Psoas muscle (tissue), 8 donors: ENCODE measurements at regions of chr1 and their contacts with region 1.

Region 1: DNA sequence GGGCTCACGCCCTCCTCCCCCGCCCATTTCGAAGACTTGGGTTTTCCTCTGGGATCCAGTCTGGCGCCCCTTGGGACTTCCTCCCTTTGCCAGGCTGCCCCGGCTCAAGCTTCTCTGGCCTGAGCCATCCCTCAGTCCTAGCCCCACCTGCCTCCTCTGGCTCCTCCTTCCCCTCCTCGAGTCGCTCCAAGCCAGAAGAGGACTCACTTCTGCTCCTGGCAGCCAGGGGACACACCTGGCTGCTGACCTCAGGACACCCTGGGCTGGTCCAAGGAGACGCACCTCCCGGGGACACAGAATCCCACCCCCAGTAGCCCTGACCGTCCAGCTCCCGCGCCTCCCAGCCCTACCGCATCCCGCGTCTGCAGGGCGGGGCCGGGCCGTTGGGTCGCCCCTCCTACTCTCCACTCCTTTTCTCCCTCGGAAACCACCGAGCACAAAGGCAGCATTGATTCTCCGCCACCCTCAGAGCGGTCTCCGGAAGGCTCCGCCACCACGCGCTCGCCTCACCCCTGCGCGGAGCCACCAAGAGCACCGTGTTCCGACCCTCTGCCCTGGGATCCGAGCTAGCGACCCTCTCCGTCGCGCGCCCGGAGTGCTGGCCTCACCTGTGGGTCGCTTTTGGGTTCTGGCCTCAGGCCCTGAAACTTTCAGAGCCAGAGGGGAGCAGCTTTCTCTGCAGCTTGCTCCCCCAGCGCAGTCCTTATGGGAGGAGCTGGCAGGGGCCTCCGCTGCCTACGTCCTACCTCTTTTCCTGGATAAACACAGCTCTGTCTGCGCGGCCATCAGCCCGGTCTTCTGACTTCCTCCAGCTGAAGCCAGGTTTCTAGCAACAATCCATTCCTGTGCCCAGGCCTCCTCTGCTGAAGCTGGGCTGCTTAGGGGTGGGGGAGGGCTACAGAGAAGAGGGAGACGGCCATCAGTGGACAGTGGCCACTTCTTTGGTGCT is at the start of gene C2CD4D:
- DNase-seq: no peak
- ATAC-seq: no peak
- H3K4me3 ChIP-seq: peak within 1 kb of the TSS; percentile 70
- H3K27ac ChIP-seq: no peak within 1 kb of the TSS
- H3K4me1 ChIP-seq: no peaks in the 10 kb centered on the region
- H3K27me3 ChIP-seq: peaks cover 0 to 28% (median 17%) of the 10 kb centered on the region in 3 donors
- CTCF ChIP-seq: no peak
- total RNA-seq, gene C2CD4D: 0.47 TPM in 1 of 4 donors, not detected in the others

Region 2: DNA sequence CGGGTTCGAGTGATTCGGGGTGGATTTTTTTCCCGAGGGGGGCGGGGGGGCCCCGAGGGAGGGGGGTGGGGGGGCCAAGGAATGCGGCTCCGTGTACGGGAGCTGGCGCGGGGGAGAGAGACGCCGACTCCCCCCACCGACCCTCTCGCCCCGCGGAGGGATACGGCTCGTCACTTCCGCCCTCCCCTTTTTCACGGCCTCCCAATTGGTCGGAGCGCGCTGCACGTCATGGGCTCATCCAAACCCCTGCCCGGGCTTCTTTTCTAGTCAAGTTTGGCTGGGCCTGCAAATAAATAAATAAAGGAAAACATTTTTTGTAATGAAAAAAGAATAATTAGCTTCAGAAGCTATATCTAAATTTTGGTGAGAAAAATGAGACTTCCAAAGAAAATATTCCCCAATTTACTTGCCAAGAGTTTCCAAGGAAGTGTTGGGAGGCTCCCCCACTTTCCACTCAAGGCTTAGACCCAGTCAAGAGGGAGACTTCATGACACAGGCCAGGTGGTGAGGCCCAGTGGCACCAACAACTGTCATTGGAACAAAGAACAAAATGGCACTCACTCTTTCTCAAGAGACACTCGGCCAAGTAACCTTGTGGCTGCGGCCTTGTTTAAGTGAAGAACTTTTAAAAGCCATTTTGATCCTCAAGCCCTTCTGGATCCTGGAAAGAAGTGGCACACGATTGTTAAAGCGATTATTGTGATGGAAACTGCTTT is 380.2 kb before region 1 on chr1 and contains the start of gene POGZ:
- intact Hi-C with region 1: loop called in 1 of 2 experiments (anchors 10 kb)
- DNase-seq: peak; percentile 98
- ATAC-seq: peak; percentile 96 to 98 (median 98)
- H3K4me3 ChIP-seq: peak within 1 kb of the TSS; percentile 84
- H3K27ac ChIP-seq: peak within 1 kb of the TSS; percentile 93
- H3K4me1 ChIP-seq: peaks cover 15% of the 10 kb centered on the region
- H3K27me3 ChIP-seq: no peaks in the 10 kb centered on the region
- CTCF ChIP-seq: no peak
- total RNA-seq, gene POGZ: 26.5 to 45.1 (median 41.8) TPM

Region 3: DNA sequence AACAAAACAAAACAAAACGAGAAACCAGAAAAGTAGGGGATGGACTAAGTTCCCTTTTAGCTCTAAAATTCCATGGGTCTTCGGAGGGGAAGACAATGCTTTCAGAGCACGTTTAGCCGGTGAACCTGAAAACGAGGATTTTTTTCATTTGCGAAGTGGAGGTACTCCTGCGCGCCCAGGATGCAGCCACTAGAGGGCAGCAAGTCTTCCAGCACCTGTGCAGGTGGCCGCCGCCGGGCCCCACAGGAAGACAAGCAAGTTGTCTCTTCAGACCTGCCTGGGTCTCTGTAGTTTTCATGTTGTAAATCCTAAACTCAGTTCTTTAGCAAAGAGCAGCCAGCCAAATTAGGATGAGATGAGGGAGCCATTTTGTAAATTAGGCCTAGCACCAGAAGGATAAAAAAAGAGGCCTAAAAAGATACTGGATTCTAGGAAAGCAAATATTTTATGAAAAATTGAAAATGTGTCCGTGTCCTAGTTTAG is 245.5 kb before region 1 on chr1:
- intact Hi-C with region 1: loop called (anchors 5 kb)
- DNase-seq: peak; percentile 72 to 84
- ATAC-seq: peak; percentile 69 to 93 (median 78)
- H3K4me3 ChIP-seq: no peak overlapping the region
- H3K27ac ChIP-seq: no peak overlapping the region
- H3K4me1 ChIP-seq: no peaks in the 10 kb centered on the region
- H3K27me3 ChIP-seq: no peaks in the 10 kb centered on the region
- CTCF ChIP-seq: peak; percentile 94

Region 4: GRCh38 chr1:151739590-151740375 is 99.9 kb before region 1 on chr1:
- intact Hi-C with region 1: loop called in 1 of 2 experiments (anchors 10 kb)
- DNase-seq: no peak
- ATAC-seq: peak in 2 of 4 donors; percentile 23 to 69
- H3K4me3 ChIP-seq: no peak overlapping the region
- H3K27ac ChIP-seq: no peak overlapping the region
- H3K4me1 ChIP-seq: peaks cover 5% of the 10 kb centered on the region
- H3K27me3 ChIP-seq: no peaks in the 10 kb centered on the region
- CTCF ChIP-seq: no peak

Region 5: DNA sequence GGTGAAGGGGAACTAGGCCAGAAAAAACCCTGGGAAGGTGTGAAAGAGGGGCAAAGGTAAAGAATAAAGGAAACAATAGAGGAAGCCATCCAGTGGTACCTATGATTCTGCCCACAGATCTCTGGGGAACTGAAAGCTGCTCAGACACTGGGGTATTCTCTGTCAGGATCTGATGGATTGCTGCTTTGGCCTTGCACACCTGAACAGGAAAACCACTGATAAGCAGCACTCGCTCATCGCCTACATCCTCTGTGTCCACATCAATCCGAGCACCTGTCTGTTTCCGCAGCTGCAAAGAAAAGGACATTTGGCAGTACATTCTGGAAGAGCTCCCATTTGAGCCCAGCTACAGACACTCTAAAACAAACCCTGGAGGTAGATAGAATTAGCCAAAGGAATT is 59.9 kb before region 1 on chr1:
- intact Hi-C with region 1: no loop called
- DNase-seq: no peak
- ATAC-seq: no peak
- H3K4me3 ChIP-seq: no peak overlapping the region
- H3K27ac ChIP-seq: no peak overlapping the region
- H3K4me1 ChIP-seq: no peaks in the 10 kb centered on the region
- H3K27me3 ChIP-seq: no peaks in the 10 kb centered on the region
- CTCF ChIP-seq: no peak

Region 6: DNA sequence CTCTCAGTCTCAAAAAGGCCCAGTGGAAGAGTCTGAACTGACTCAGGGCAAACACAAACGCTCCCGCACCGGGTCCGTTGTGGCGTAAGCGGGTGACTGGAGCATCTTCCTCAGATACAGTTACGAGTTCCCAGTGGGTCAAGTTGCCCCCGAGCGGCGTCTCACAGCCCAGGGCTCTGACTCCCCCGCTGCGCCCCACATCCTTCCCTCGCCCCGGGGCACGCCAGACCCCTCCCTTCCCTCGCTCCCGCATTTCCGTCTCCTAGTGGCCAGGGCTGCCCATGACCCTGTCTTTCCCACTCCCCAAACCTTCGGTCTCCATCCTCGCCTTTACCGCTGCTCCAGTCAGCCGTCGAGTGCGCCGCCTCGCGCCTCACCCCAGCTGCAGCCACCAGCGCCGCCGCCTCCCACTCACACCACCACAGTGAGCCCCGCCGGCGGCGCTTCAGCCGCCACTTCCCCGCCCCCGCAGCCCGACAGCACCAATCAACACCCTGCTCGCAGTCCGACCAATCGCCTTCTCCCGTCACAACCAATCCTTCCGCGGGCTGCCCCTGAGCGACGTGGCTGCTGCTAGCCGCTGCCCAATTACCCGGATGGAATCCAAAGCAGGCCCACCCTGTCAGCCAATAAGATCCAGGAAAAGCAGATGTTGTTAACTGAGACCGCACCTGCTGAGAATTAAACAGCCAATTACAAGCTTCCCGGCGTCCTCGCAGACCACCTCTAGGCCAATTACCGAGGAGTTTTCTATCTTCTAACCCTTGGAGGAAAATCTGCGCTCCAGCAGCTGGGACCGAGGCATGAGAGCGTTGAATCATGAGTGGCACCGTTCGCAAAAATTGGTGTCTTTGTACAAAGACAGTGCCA is 49.4 kb before region 1 on chr1 and contains the start of gene TDRKH:
- intact Hi-C with region 1: loop called in 1 of 2 experiments (anchors 5 kb)
- DNase-seq: peak; percentile 99
- ATAC-seq: peak; percentile 98 to 99 (median 99)
- H3K4me3 ChIP-seq: peak within 1 kb of the TSS; percentile 91
- H3K27ac ChIP-seq: peak within 1 kb of the TSS; percentile 70
- H3K4me1 ChIP-seq: peaks cover 12% of the 10 kb centered on the region
- H3K27me3 ChIP-seq: no peaks in the 10 kb centered on the region
- CTCF ChIP-seq: peak; percentile 19
- total RNA-seq, gene TDRKH: 4.1 to 12.1 (median 5.8) TPM

Region 7: GRCh38 chr1:151811147-151811546 is 28.6 kb before region 1 on chr1:
- intact Hi-C with region 1: no loop called
- DNase-seq: peak in 1 of 2 donors; percentile 34
- ATAC-seq: peak; percentile 57 to 77 (median 74)
- H3K4me3 ChIP-seq: no peak overlapping the region
- H3K27ac ChIP-seq: peak overlapping the region; percentile 39
- H3K4me1 ChIP-seq: peaks cover 10% of the 10 kb centered on the region
- H3K27me3 ChIP-seq: no peaks in the 10 kb centered on the region
- CTCF ChIP-seq: no peak